ENCODE measurements at regions of chr19 and their contacts with region 1.

Region 1: DNA sequence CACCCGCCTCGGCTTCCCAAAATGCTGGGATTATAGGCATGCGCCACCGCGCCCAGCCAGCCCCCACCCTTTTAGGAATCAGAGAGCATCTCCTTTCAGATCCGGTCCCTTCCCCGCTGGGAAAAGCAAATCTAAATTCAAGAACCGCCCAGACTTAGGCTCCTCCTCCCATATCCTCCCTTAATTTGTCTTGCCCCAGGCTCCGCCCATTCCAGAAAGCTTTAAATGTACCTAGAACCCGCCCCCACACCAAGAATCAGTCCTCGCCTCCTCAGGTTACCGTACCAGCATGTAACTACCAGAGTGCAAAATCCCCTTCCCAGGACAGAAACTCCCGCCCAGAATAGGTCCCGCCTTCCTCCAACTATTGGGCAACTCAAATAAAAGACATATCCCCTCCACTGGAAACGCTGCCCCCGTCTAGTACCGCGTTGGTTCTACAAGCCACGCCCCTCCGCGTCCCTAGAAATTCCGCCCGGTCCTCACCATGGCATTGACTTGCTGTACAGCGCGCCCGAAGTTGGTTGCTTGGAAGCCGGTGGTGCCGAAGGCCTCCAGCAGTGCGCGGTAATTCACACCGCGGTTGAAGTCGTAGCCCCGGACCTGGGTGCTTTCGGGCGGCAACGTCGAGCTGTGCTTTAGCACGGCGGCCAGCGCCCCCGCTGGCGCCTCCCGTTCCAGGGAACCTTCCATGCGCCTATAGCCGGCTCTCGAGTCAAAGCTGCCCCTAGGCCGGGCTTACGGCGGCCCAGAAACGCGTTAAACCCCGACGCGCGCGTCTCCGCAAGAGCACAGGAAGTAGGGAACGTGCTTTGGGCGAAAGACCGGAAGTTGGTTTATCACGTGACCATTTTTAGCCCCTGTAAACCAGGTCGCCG is at the start of gene DHPS:
- DNase-seq: peak; percentile 97
- ATAC-seq: peak; percentile 81
- H3K4me3 Mint-ChIP-seq: peak within 1 kb of the TSS; percentile 94
- H3K27ac Mint-ChIP-seq: peak within 1 kb of the TSS; percentile 95
- H3K4me1 Mint-ChIP-seq: peaks cover 23% of the 10 kb centered on the region
- H3K27me3 Mint-ChIP-seq: no peaks in the 10 kb centered on the region
- total RNA-seq, gene DHPS: 109 to 121 TPM

Region 2: DNA sequence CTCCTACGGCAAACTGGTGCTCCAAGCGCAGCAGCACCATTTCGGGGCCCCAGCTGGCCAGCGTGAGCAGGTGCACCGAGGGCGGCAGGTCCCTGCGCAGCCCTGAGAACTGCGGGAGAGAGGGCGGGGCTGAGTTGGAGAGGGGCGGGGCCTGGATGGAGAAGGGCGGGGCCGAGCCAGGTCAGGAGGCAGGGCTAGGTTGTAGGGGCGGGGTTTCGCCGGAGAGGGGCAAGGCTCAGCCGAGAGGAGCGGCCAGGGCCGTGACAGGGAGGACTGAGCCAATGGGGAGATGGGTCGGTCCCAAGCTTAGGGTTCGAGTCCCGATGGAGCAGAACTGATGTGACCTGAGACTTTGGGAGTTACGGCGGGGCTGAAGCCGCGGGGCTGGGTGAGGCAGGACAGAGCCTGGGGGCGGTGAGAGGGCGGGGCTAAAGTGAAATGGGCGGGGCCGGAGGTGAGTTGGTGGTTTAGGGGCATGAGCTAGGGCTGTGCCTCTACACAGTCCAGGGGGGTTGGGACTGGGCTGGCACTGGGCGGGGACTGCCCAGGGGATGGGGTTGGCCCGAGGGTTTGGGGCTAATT is 33.7 kb before region 1 on chr19:
- CTCF ChIA-PET with region 1: no interaction called
- POLR2A ChIA-PET with region 1: no interaction called
- DNase-seq: no peak
- ATAC-seq: peak; percentile 70
- H3K4me3 Mint-ChIP-seq: no peak overlapping the region
- H3K27ac Mint-ChIP-seq: no peak overlapping the region
- H3K4me1 Mint-ChIP-seq: peaks cover 9% of the 10 kb centered on the region
- H3K27me3 Mint-ChIP-seq: no peaks in the 10 kb centered on the region

Region 3: GRCh38 chr19:12666265-12667048 is 14.9 kb before region 1 on chr19 and contains the starts of genes MAN2B1 and WDR83:
- CTCF ChIA-PET with region 1: interaction called, 8 read pairs
- POLR2A ChIA-PET with region 1: interaction called, 14 read pairs
- DNase-seq: peak; percentile 79
- ATAC-seq: peak; percentile 78
- H3K4me3 Mint-ChIP-seq: peak within 1 kb of the TSS; percentile 86
- H3K27ac Mint-ChIP-seq: peak within 1 kb of the TSS; percentile 78
- H3K4me1 Mint-ChIP-seq: peaks cover 51% of the 10 kb centered on the region
- H3K27me3 Mint-ChIP-seq: no peaks in the 10 kb centered on the region
- total RNA-seq, gene MAN2B1: 95.5 to 102 TPM
- total RNA-seq, gene WDR83: 16.4 to 19.4 TPM

Region 4: DNA sequence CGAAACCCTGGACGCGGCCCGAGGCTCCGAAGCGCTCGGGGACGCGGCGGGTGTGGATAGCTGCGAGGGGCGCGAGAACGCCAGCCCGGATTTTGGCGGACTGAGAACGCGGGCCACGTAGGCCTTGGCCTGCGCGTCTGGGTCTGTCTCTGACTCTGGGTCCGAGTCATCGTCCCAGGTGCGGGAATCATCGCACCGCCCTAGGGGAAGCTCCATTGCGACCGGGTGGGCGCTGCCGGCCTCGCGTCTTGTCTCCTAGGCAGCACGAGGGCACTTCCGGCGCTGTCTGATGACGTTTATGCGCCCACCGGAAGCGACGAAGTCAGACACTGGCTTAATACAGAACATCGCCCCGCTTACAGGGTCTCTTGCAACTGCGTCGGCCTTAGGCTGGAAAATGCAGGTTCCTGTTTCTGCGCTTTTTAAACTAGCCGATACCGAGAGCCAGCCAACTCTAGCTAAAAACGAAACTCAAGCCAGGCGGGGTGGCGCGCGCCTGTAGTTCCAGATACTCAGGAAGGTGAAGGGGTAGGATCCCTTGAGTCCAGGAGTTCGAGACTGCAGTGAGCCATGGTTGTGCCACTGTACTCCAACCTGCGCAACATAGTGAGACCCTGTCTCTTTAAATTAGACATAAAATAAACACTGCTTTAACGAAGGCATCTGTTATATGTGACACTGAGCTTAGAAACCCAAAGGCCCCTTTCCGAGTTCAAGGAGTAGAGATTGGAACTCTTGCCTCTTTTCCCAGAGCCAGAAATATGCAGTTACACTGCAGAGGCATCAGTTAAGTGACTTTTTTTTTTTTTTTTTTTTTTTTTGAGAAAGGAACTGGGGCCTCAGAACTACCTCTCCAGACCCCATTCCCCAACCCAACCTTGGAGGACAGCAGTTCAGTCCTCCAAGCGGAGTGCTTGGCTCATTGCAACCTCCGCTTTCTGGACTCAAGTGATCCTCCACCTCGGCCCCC is 15.3 kb after region 1 on chr19 and contains the start of gene FBXW9:
- CTCF ChIA-PET with region 1: interaction called, 3 read pairs
- POLR2A ChIA-PET with region 1: interaction called, 18 read pairs
- DNase-seq: peak; percentile 98
- ATAC-seq: peak; percentile 90
- H3K4me3 Mint-ChIP-seq: peak within 1 kb of the TSS; percentile 89
- H3K27ac Mint-ChIP-seq: peak within 1 kb of the TSS; percentile 98
- H3K4me1 Mint-ChIP-seq: peaks cover 26% of the 10 kb centered on the region
- H3K27me3 Mint-ChIP-seq: no peaks in the 10 kb centered on the region
- total RNA-seq, gene FBXW9: 6.0 to 6.1 TPM

Measured in activated CD8-positive, alpha-beta T cell treated with anti-CD3 and anti-CD28 coated beads, Interleukin-2, amount 10 ng/mL, durations not matched to agents 7 days and 5 days (primary cell).